ENCODE measurements at regions of chr14 and their contacts with region 1.

Region 1: DNA sequence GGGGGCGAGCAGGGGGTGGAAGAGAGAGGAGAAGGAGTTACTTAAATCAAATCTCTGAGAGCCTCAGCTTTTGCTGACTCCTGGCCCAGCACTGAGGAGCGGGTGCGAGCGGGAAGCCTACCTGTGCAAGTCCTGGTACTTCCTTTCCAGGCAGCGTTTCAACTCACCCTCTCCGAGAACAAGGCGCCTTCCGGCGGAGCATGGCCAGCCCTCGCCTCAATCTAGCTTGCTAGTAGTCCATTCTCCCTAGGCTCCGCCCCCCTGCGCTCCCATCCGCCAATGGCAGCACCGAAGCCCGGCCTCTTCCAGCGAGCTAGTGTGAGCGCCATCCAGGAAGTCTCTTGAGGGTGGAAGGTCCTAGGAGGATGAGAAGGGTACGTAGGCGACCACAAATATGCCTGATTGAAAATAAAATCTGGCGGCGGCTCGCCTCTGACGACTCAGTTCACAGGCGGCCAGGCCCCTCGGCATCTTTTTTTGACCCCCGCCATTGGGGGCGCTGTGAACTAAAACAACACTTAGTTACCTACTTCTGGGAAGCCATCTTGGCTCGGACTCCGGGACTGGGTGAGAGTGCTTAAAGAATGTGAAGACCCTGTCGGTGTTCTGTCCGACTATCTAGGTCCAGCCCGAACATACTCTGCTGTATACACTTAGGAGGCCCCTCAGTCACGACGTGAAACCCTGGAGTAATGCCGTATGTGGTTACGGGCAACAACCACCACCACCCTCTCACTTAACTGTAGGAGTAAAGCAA is at the start of gene CHD8:
- DNase-seq: peak; percentile 100
- ATAC-seq: peak; percentile 99
- H3K4me3 Mint-ChIP-seq: peak within 1 kb of the TSS; percentile 85
- H3K27ac Mint-ChIP-seq: peak within 1 kb of the TSS; percentile 97
- H3K4me1 Mint-ChIP-seq: peaks cover 29% of the 10 kb centered on the region
- H3K27me3 Mint-ChIP-seq: no peaks in the 10 kb centered on the region
- CTCF ChIP-seq: peak; percentile 45
- total RNA-seq, gene CHD8: 82.3 to 85.3 TPM

Region 2: DNA sequence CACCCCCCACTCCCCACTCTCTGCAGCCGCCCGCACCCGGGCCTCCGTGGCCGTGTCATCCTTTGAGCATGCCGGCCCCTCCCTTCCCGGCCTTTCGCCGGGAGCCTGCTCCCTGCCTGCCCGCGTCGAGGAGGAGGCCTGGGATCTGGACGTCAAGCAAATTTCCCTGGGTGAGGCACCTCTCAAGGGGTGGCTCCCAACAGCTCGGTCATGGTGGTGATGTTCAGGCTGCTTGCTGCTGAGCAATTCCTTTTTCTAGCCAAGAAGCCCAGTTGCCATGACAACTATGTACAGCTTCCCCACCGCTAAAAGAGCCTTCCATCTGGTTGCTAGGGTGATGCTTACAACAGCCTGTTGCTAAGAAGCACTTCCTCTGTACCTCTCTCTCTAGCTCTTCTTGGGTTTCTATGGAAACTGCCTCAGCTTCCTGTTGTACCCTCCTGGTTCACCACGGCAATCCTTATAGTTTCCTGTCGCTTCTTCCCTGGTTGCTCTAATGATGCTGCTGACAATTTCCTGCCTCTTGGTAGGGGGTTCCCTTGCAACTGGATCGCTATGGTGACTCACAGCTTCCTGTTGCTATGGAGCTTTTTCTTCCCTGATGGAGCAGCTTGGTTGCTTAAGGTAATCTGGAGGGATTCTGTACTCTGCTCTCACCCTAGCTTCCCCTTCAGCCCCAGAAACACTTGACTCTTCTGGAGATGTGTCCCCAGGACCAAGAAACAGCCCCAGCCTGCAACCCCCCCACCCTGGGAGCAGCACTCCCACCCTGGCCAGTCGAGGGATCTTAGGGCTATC is 368.6 kb before region 1 on chr14:
- CTCF ChIA-PET with region 1: no interaction called
- POLR2A ChIA-PET with region 1: no interaction called
- intact Hi-C with region 1: no loop called
- DNase-seq: peak; percentile 59
- ATAC-seq: peak; percentile 78
- H3K4me3 Mint-ChIP-seq: no peak overlapping the region
- H3K27ac Mint-ChIP-seq: no peak overlapping the region
- H3K4me1 Mint-ChIP-seq: peaks cover 17% of the 10 kb centered on the region
- H3K27me3 Mint-ChIP-seq: no peaks in the 10 kb centered on the region
- CTCF ChIP-seq: no peak

Region 3: GRCh38 chr14:21437063-21437901 is 18.8 kb before region 1 on chr14:
- CTCF ChIA-PET with region 1: interaction called, 27 read pairs
- POLR2A ChIA-PET with region 1: interaction called, 17 read pairs
- intact Hi-C with region 1: loop called (anchors 1 kb)
- DNase-seq: peak; percentile 100
- ATAC-seq: peak; percentile 100
- H3K4me3 Mint-ChIP-seq: peak overlapping the region; percentile 81
- H3K27ac Mint-ChIP-seq: peak overlapping the region; percentile 86
- H3K4me1 Mint-ChIP-seq: peaks cover 46% of the 10 kb centered on the region
- H3K27me3 Mint-ChIP-seq: no peaks in the 10 kb centered on the region
- CTCF ChIP-seq: no peak

Region 4: DNA sequence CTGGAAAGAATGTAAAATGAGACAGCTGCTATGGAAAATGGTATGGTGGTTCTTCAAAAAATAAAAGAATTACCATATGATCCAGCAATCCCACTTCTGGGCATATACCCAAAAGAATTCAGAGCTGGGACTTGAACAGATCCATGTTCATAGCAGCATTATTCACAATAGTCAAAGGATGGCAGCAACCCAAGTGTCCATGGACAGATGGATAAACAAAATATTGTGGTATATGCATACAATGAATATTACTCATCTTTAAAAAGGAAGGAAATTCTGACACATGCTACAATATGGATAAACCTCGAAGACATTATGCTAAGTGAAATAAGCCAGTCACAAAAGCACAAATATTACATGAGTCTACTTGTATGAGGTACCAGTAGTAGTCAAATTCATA is 11.5 kb after region 1 on chr14:
- CTCF ChIA-PET with region 1: interaction called, 18 read pairs
- POLR2A ChIA-PET with region 1: interaction called, 12 read pairs
- intact Hi-C with region 1: no loop called
- DNase-seq: no peak
- ATAC-seq: no peak
- H3K4me3 Mint-ChIP-seq: no peak overlapping the region
- H3K27ac Mint-ChIP-seq: no peak overlapping the region
- H3K4me1 Mint-ChIP-seq: peaks cover 2% of the 10 kb centered on the region
- H3K27me3 Mint-ChIP-seq: no peaks in the 10 kb centered on the region
- CTCF ChIP-seq: no peak

Region 5: GRCh38 chr14:21536418-21537089 is 80.5 kb after region 1 on chr14:
- CTCF ChIA-PET with region 1: no interaction called
- POLR2A ChIA-PET with region 1: no interaction called
- intact Hi-C with region 1: no loop called
- DNase-seq: no peak
- ATAC-seq: no peak
- H3K4me3 Mint-ChIP-seq: no peak overlapping the region
- H3K27ac Mint-ChIP-seq: no peak overlapping the region
- H3K4me1 Mint-ChIP-seq: peaks cover 10% of the 10 kb centered on the region
- H3K27me3 Mint-ChIP-seq: peaks cover 36% of the 10 kb centered on the region
- CTCF ChIP-seq: no peak